ENCODE measurements at regions of chr16 and their contacts with region 1.

Region 1: DNA sequence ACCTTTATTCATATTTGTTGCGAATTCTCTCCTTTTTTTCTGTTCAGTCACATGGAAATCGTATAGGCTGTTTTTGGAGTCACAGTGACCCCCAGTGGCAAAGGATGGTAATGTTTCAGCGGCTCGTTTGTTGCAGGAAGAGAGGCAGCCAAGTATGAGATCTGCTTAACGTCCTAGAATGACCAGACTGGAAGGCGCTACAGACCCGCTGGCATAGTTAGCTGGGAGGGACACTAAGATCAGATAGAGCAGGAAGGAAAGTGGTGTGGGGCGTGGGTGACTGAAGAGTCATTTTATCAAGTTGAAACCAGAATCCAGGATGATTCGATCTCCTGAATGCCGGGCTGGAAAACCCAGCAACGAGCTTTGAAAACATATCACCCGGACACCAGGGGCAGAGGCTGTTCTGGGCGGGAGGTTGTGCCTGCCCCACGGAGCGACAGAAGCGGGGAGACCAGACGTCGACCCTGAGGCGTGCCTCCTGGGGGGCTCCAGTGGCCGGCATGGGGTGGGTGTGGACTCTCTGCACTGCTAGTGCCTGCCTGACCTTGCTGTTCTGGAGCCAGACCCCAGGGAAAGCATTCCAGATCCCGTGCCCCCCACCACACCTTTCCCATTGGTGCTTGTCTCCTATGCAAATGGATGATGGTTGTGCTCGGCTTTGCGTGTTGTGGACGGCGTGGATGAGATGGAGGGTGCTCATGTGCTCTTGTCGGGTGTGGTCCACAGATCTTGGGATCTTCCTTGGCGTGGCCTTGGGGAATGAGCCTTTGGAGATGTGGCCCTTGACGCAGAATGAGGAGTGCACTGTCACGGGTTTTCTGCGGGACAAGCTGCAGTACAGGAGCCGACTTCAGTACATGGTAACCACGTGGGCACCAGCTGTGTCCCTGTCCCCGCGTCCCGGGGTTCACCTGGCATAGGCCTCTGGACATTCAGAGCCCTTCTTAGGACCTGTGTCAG is 7.7 kb downstream of the IL34 start:
- DNase-seq: no peak
- H3K4me3 ChIP-seq: peak overlapping the region; percentile 43
- CTCF ChIP-seq: peak; percentile 66

Region 2: DNA sequence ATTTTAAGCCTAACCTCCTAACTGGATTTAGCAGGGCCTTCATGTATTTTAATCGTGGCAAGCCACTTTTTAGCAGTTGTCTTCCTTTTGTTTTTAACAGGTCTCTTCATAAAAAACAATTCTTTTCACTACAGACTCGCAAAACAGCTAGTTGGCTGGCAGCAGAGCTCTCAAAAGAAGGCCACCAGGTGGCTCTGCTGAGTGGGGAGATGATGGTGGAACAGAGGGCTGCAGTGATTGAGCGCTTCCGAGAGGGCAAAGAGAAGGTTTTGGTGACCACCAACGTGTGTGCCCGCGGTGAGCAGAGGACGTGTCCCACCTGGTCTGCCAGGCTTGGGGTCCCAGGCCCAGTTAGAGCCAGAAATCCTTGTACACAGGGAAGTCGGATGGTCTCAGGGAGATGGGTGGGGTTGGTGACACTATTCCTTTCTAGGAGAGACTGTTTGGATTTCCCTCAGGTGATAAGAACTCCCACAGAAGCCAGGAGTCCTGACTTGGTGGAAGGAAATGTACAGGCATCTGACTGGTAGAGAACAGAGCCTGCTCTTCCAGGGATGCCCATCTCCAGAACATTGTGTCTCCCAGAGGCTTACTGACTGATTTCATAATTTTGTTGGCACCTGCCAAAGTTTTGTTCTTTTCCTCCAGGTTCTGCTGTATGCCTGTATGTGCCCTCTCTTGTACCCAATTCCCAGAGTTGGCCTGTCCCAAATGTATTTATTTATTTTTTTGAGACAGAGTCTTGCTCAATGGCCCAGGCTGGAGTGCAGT is 322.3 kb before region 1 on chr16:
- CTCF ChIA-PET with region 1: interaction called, 45 read pairs
- POLR2A ChIA-PET with region 1: no interaction called
- DNase-seq: no peak
- H3K4me3 ChIP-seq: no peak overlapping the region
- CTCF ChIP-seq: peak; percentile 44

Region 3: GRCh38 chr16:70380861-70381603 is 273.1 kb before region 1 on chr16:
- CTCF ChIA-PET with region 1: interaction called, 79 read pairs
- POLR2A ChIA-PET with region 1: interaction called, 3 read pairs
- DNase-seq: peak; percentile 76
- H3K4me3 ChIP-seq: peak overlapping the region; percentile 84
- CTCF ChIP-seq: peak; percentile 22

Region 4: GRCh38 chr16:70561623-70562022 is 92.5 kb before region 1 on chr16:
- CTCF ChIA-PET with region 1: interaction called, 54 read pairs
- POLR2A ChIA-PET with region 1: no interaction called
- DNase-seq: no peak
- H3K4me3 ChIP-seq: no peak overlapping the region
- CTCF ChIP-seq: no peak

Region 5: DNA sequence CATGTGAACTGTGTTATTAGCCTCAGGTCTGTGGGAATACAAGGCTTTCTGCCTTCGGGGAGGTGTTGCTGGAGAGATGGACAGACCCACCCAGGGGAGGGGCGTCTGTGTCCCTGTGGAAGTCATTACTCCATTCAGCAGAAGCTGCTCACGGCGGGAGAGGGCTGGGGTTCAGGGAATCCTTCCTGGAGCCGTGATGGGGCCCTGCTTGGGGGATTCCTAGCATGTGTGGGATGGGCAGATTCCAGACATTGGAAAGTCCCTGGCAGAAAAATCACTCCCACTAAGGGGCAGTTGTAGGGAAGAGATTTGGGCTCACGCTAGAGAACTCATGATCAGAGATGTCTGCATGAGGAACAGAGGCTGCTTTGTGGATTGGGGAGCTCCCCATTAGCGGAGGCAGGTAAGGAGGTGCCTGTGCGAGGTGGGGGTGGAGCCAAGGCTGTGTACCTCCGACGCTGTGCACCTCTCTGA is 64.1 kb before region 1 on chr16:
- CTCF ChIA-PET with region 1: interaction called, 11 read pairs
- POLR2A ChIA-PET with region 1: no interaction called
- DNase-seq: peak; percentile 49
- H3K4me3 ChIP-seq: peak overlapping the region; percentile 15; the same call in 1 of the 2 replicates
- CTCF ChIP-seq: no peak

Region 6: GRCh38 chr16:70770626-70771552 is 116.8 kb after region 1 on chr16:
- CTCF ChIA-PET with region 1: interaction called, 80 read pairs
- POLR2A ChIA-PET with region 1: no interaction called
- DNase-seq: no peak
- H3K4me3 ChIP-seq: no peak overlapping the region
- CTCF ChIP-seq: peak; percentile 91

Measured in AG04449 (cell line).